K562 (cell line): ENCODE measurements at regions of chr3 and their contacts with region 1.

Region 1: GRCh38 chr3:40494698-40495097 is 11.1 kb upstream of the ZNF620 start:
- DNase-seq: no peak
- ATAC-seq: no peak
- H3K4me3 ChIP-seq: no peak overlapping the region
- H3K27ac ChIP-seq: no peak overlapping the region
- H3K4me1 ChIP-seq: no peaks in the 10 kb centered on the region
- H3K27me3 ChIP-seq: 0 out of 5 replicates have a peak, but pooled peaks cover 0 to 3% of the 10 kb centered on the region in 2 experiments
- CTCF ChIP-seq: no peak
- EP300 ChIP-seq: no peak
- POLR2A ChIP-seq: no peak
- RAD21 ChIP-seq: no peak

Region 2: DNA sequence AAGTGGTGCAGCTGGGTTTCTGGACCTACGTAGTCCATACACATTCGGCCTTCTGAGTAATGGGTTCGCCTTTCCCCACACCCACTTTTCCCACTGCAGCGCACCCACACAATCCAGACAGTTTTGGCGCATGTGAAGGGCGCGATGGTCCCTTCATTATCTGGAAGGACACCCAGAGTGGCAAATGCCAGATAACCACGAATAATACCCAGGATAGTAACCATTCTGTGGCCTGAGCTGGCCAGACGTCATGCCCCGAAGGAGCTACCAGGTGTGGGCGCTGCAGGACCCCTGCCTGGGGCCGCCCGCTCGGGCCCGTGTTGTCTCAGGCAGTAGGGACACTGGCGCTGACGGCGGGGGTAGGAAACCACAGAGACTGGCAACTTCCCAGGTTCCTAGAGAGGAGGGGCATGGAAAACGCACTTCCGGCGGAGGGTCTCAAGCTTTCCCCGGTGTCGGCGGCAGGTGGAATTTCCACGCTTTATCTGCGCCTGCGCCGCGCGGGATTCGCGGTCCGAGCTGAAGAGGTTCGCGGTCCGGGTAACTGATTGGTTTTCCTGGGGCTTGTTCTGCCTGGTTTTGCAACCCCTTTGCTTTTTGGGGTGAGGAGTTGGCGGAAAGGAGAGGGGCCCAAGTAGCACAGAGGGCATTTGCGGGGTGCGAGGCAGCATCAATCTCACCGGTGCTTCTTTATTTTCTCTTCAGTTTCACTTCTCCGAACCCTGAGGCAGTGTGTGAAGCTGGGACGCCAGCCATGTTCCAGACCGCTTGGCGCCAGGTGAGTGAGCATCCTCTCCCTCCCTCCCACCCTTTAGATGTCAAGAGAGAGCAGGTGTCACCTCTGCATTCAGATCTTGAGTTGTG is 11.1 kb after region 1 on chr3 and contains the start of gene ZNF620:
- CTCF ChIA-PET with region 1: no interaction called
- POLR2A ChIA-PET with region 1: interaction called, 19 read pairs
- in situ Hi-C with region 1: no loop called
- intact Hi-C with region 1: no loop called
- DNase-seq: peak; percentile 78 to 86 (median 82)
- ATAC-seq: peak; percentile 96
- H3K4me3 ChIP-seq: peak within 1 kb of the TSS; percentile 52
- H3K27ac ChIP-seq: peak within 1 kb of the TSS; percentile 55
- H3K4me1 ChIP-seq: peaks cover 0 to 7% of the 10 kb centered on the region in 2 experiments; a peak in 3 of 5 replicates
- H3K27me3 ChIP-seq: no peaks in the 10 kb centered on the region
- CTCF ChIP-seq: peak; percentile 63 to 72 (median 64)
- EP300 ChIP-seq: no peak
- POLR2A ChIP-seq: peak; percentile 74
- RAD21 ChIP-seq: peak in 1 of 2 experiments; percentile 53; a peak in 2 of 4 replicates
- polyA plus RNA-seq, gene ZNF620: 1.2 to 3.7 TPM

Region 3: GRCh38 chr3:40524568-40525285 is 30.0 kb after region 1 on chr3 and contains the start of gene ZNF621:
- CTCF ChIA-PET with region 1: no interaction called
- POLR2A ChIA-PET with region 1: interaction called, 10 read pairs
- in situ Hi-C with region 1: no loop called
- intact Hi-C with region 1: no loop called
- DNase-seq: peak; percentile 95 to 98 (median 98)
- ATAC-seq: peak; percentile 99
- H3K4me3 ChIP-seq: peak within 1 kb of the TSS; percentile 87
- H3K27ac ChIP-seq: peak within 1 kb of the TSS; percentile 88
- H3K4me1 ChIP-seq: peaks cover 9 to 12% of the 10 kb centered on the region in 2 experiments; a peak in 4 of 5 replicates
- H3K27me3 ChIP-seq: no peaks in the 10 kb centered on the region
- CTCF ChIP-seq: peak in 1 of 3 experiments; percentile 16; a peak in 2 of 6 replicates
- EP300 ChIP-seq: peak; percentile 5; the same call in 1 of the 2 replicates
- POLR2A ChIP-seq: peak; percentile 98
- RAD21 ChIP-seq: peak in 1 of 2 experiments; percentile 44; a peak in 2 of 4 replicates
- polyA plus RNA-seq, gene ZNF621: 4.7 to 7.3 TPM

Region 4: GRCh38 chr3:40550167-40550566 is 55.5 kb after region 1 on chr3:
- CTCF ChIA-PET with region 1: no interaction called
- POLR2A ChIA-PET with region 1: no interaction called
- in situ Hi-C with region 1: no loop called
- intact Hi-C with region 1: no loop called
- DNase-seq: no peak
- ATAC-seq: peak; percentile 55
- H3K4me3 ChIP-seq: no peak overlapping the region
- H3K27ac ChIP-seq: no peak overlapping the region
- H3K4me1 ChIP-seq: peaks cover 3% of the 10 kb centered on the region in 2 experiments; a peak in 2 of 5 replicates
- H3K27me3 ChIP-seq: no peaks in the 10 kb centered on the region
- CTCF ChIP-seq: no peak
- EP300 ChIP-seq: no peak
- POLR2A ChIP-seq: no peak
- RAD21 ChIP-seq: no peak

Region 5: DNA sequence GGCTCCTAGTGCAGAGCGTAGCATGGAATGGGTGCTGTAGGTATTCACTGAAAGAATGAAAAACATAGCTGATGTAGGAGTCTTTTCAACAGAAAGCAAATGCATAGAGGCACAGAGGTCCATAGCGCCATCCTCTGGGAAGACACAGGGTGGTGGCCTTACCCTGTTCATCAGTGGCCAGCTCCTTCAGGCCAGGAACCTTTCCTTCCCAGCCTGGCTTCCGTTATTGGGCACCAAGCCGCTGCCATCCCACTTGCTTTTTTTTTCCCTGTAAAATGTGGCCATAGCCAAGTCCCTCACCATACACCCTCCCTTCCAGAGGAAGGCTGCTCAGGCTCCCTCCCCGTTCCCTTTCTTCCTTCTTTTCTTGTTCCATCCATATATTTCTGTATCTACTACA is 148.1 kb after region 1 on chr3:
- CTCF ChIA-PET with region 1: no interaction called
- POLR2A ChIA-PET with region 1: no interaction called
- in situ Hi-C with region 1: no loop called
- intact Hi-C with region 1: no loop called
- DNase-seq: no peak
- ATAC-seq: peak; percentile 27; the same call in 2 of the 3 replicates
- H3K4me3 ChIP-seq: no peak overlapping the region
- H3K27ac ChIP-seq: no peak overlapping the region
- H3K4me1 ChIP-seq: no peaks in the 10 kb centered on the region
- H3K27me3 ChIP-seq: peaks cover 0 to 6% of the 10 kb centered on the region in 2 experiments; a peak in 2 of 5 replicates
- CTCF ChIP-seq: peak in 2 of 3 experiments; percentile 12 to 23; a peak in 1 of 6 replicates
- EP300 ChIP-seq: no peak
- POLR2A ChIP-seq: no peak
- RAD21 ChIP-seq: no peak